ENCODE measurements at regions of chr5 and their contacts with region 1.

Region 1: DNA sequence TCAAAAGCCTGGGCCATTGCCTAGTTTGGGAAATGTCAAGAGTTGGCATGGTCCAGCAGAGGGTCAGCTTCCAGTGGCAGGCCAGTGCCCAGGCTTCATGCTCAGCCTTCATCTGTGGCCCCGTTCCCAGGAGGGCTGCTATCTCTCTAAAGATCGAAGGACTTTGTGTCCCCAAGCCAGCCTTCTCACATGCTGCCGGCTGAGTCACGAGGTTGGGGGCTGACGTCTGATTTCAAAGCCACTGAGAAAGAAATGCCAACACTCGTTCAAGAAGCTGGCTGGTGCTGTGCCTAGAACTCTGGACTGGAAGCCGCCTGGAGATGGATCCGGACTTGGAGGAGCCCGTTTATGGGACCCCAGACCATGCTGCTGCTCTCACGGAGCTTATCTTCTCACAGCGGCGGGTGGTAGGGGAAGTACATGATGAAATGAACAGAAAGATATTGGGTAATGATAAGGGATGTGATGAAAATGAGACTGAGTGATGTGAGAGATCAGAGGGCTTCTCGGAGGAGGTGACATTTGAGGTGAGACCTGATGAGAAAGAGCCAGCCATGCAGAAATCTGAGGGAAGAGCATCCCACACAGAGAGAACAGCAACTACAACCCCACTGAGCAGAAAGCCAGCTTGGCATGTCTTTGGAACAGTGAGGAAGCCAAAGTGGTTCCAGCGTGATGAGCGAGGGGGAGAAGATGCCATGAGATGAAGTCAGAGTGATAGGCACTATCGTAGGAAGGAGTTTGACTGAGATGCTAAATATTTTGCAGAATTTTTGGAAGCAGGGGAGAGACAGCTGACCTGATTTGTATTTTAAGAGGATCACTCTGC is 54.9 kb upstream of the BOD1 start:
- DNase-seq: peak; percentile 92 to 97
- ATAC-seq: peak; percentile 85 to 88
- H3K4me3 ChIP-seq: peak overlapping the region; percentile 32 to 48 (median 44)
- H3K27ac ChIP-seq: peak overlapping the region; percentile 87 to 91 (median 88)
- H3K4me1 ChIP-seq: peaks cover 35 to 44% of the 10 kb centered on the region in 2 donors
- H3K27me3 ChIP-seq: no peaks in the 10 kb centered on the region
- CTCF ChIP-seq: no peak
- POLR2A ChIP-seq: peak; percentile 66 to 67

Region 2: DNA sequence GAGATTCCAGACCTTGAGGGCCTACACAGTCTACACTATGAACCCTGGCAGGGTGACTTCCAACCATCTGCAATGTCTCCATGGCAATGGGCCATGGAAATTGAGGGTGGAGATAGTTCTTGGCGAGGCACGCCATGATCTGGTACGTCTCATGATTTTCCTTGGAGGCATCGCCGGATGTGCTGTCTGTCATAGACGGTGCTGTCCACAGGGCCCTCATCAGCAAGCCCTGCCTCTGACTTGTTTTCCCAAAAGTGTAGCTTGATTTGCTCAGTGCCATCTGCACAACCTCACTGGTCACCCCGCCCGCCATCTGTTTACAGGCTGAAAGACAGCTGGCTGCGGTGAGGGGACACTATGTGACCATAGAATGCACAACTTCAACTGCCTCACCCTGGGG is 128.4 kb before region 1 on chr5:
- in situ Hi-C with region 1: no loop called
- intact Hi-C with region 1: no loop called
- DNase-seq: peak in 1 of 2 donors; percentile 39
- ATAC-seq: peak in 1 of 2 donors; percentile 27
- H3K4me3 ChIP-seq: no peak overlapping the region
- H3K27ac ChIP-seq: no peak overlapping the region
- H3K4me1 ChIP-seq: peaks cover 4 to 6% of the 10 kb centered on the region in 2 donors
- H3K27me3 ChIP-seq: no peaks in the 10 kb centered on the region
- CTCF ChIP-seq: no peak
- POLR2A ChIP-seq: no peak

Region 3: GRCh38 chr5:173707392-173707791 is 36.1 kb after region 1 on chr5:
- in situ Hi-C with region 1: no loop called
- intact Hi-C with region 1: loop called (anchors 2 kb)
- DNase-seq: peak; percentile 93 to 97
- ATAC-seq: peak; percentile 98 to 99
- H3K4me3 ChIP-seq: no peak overlapping the region
- H3K27ac ChIP-seq: peak overlapping the region; percentile 78 to 86 (median 84)
- H3K4me1 ChIP-seq: peaks cover 16 to 19% of the 10 kb centered on the region in 2 donors
- H3K27me3 ChIP-seq: no peaks in the 10 kb centered on the region
- CTCF ChIP-seq: no peak
- POLR2A ChIP-seq: peak; percentile 15 to 37

Region 4: GRCh38 chr5:173920024-173920753 is 248.9 kb after region 1 on chr5:
- in situ Hi-C with region 1: no loop called
- intact Hi-C with region 1: loop called (anchors 5 kb)
- DNase-seq: no peak
- ATAC-seq: no peak
- H3K4me3 ChIP-seq: no peak overlapping the region
- H3K27ac ChIP-seq: peak overlapping the region; percentile 89 to 99 (median 95)
- H3K4me1 ChIP-seq: peaks cover 79 to 93% of the 10 kb centered on the region in 2 donors
- H3K27me3 ChIP-seq: no peaks in the 10 kb centered on the region
- CTCF ChIP-seq: peak in 1 of 5 experiments; percentile 23
- POLR2A ChIP-seq: no peak

Measured in gastrocnemius medialis (tissue), 4 donors.